ENCODE measurements at regions of chr2 and their contacts with region 1.

Region 1: DNA sequence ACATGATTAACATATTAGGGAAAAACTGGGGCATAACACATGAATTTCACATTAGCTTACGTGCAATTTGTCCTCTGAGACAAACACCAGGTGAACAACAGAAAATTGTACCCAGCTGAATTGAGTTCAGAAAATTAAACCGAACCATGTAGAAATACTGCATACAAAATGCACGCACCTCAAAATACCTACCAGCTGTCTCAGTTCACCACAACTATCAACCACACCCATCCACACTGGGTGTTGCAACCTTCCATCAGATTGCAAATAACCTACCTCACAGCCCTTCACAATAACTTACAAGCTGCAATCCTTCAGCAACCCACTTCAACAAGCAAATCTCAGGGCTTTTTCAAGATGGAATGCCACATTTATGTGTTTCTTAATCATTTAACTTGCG is 55.9 kb downstream of the UNC50 start:
- DNase-seq: peak; percentile 17 to 82 (median 72)
- H3K4me3 ChIP-seq: peak overlapping the region; percentile 26
- H3K4me3 Mint-ChIP-seq: peak overlapping the region; percentile 79 to 94 (median 86)
- H3K27ac ChIP-seq: no peak overlapping the region
- H3K27ac Mint-ChIP-seq: peak overlapping the region; percentile 59 to 97 (median 91)
- H3K4me1 ChIP-seq: peaks cover 76% of the 10 kb centered on the region
- H3K4me1 Mint-ChIP-seq: peaks cover 64 to 90% (median 86%) of the 10 kb centered on the region in 3 donors
- H3K27me3 ChIP-seq: no peaks in the 10 kb centered on the region
- H3K27me3 Mint-ChIP-seq: no peaks in the 10 kb centered on the region

Region 2: GRCh38 chr2:98685930-98686887 is 21.9 kb after region 1 on chr2:
- CTCF ChIA-PET with region 1: no interaction called
- POLR2A ChIA-PET with region 1: no interaction called
- DNase-seq: no peak
- H3K4me3 ChIP-seq: no peak overlapping the region
- H3K4me3 Mint-ChIP-seq: peak overlapping the region in 1 of 7 donors; percentile 38
- H3K27ac ChIP-seq: no peak overlapping the region
- H3K27ac Mint-ChIP-seq: peak overlapping the region; percentile 32 to 89 (median 68)
- H3K4me1 ChIP-seq: peaks cover 67% of the 10 kb centered on the region
- H3K4me1 Mint-ChIP-seq: peaks cover 71 to 94% (median 89%) of the 10 kb centered on the region in 3 donors
- H3K27me3 ChIP-seq: no peaks in the 10 kb centered on the region
- H3K27me3 Mint-ChIP-seq: no peaks in the 10 kb centered on the region

Region 3: GRCh38 chr2:98731041-98731893 is 66.9 kb after region 1 on chr2 and contains the start of gene MGAT4A:
- CTCF ChIA-PET with region 1: interaction called, 25 read pairs
- POLR2A ChIA-PET with region 1: interaction called, 16 read pairs
- DNase-seq: peak; percentile 73 to 86 (median 81)
- H3K4me3 ChIP-seq: peak within 1 kb of the TSS; percentile 72
- H3K4me3 Mint-ChIP-seq: peak within 1 kb of the TSS; percentile 93 to 97 (median 95)
- H3K27ac ChIP-seq: peak within 1 kb of the TSS; percentile 81
- H3K27ac Mint-ChIP-seq: peak within 1 kb of the TSS; percentile 79 to 98 (median 95)
- H3K4me1 ChIP-seq: peaks cover 62% of the 10 kb centered on the region
- H3K4me1 Mint-ChIP-seq: peaks cover 64 to 76% (median 72%) of the 10 kb centered on the region in 3 donors
- H3K27me3 ChIP-seq: no peaks in the 10 kb centered on the region
- H3K27me3 Mint-ChIP-seq: no peaks in the 10 kb centered on the region
- total RNA-seq, gene MGAT4A: 65.2 to 66.8 TPM

Region 4: GRCh38 chr2:98757904-98758421 is 93.6 kb after region 1 on chr2:
- CTCF ChIA-PET with region 1: no interaction called
- POLR2A ChIA-PET with region 1: interaction called, 11 read pairs
- DNase-seq: peak; percentile 38 to 78 (median 66)
- H3K4me3 ChIP-seq: peak overlapping the region; percentile 51
- H3K4me3 Mint-ChIP-seq: peak overlapping the region; percentile 2 to 89 (median 79)
- H3K27ac ChIP-seq: peak overlapping the region; percentile 38
- H3K27ac Mint-ChIP-seq: peak overlapping the region; percentile 89 to 99 (median 96)
- H3K4me1 ChIP-seq: peaks cover 69% of the 10 kb centered on the region
- H3K4me1 Mint-ChIP-seq: peaks cover 54 to 89% (median 77%) of the 10 kb centered on the region in 3 donors
- H3K27me3 ChIP-seq: no peaks in the 10 kb centered on the region
- H3K27me3 Mint-ChIP-seq: no peaks in the 10 kb centered on the region

Measured in CD8-positive, alpha-beta memory T cell (primary cell).